ENCODE measurements at regions of chr3 and their contacts with region 1.

Region 1: DNA sequence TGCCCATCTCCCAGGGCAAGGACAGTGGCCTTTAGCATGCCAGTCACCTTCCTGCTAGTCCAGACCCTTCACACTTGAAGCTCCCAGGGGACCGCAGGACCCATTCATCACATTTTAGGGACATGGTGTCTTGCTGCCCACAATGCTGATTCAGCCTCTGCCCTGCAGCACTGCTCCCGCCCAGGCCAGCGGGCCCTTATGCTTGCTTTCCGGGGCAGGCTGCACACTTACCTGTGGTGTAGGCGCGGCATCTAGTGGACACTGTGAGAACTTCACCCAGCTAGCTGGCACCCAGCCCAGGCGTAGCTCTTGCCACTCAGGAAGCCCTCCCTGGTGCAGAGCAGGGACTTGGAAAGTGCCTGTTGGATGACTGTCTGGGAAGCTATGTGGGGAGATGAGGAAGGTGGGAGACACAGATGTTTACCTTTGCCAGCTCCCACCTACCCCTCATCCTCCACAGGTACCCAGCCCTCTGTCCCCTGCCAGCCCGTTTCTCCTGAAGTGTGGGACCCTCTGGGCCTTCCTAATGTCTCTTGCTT is 26.2 kb upstream of the NR2C2 start:
- DNase-seq: peak; percentile 82 to 95 (median 91)
- H3K4me3 ChIP-seq: no peak overlapping the region
- H3K27ac ChIP-seq: no peak overlapping the region
- H3K4me1 ChIP-seq: peaks cover 1% of the 10 kb centered on the region
- H3K27me3 ChIP-seq: no peaks in the 10 kb centered on the region
- CTCF ChIP-seq: peak; percentile 95 to 99 (median 99)
- EP300 ChIP-seq: no peak
- POLR2A ChIP-seq: no peak

Region 2: GRCh38 chr3:14203521-14204079 is 717.5 kb before region 1 on chr3:
- intact Hi-C with region 1: loop called in 1 of 4 experiments (anchors 10 kb)
- DNase-seq: peak; percentile 72 to 84 (median 74)
- H3K4me3 ChIP-seq: no peak overlapping the region
- H3K27ac ChIP-seq: peak overlapping the region in 1 of 2 donors; percentile 3
- H3K4me1 ChIP-seq: peaks cover 19% of the 10 kb centered on the region
- H3K27me3 ChIP-seq: no peaks in the 10 kb centered on the region
- CTCF ChIP-seq: peak; percentile 86 to 93 (median 90)
- EP300 ChIP-seq: no peak
- POLR2A ChIP-seq: no peak

Region 3: GRCh38 chr3:14439579-14440518 is 481.3 kb before region 1 on chr3:
- intact Hi-C with region 1: no loop called
- DNase-seq: peak; percentile 72 to 84 (median 78)
- H3K4me3 ChIP-seq: no peak overlapping the region
- H3K27ac ChIP-seq: peak overlapping the region in 1 of 2 donors; percentile 29
- H3K4me1 ChIP-seq: peaks cover 31% of the 10 kb centered on the region
- H3K27me3 ChIP-seq: no peaks in the 10 kb centered on the region
- CTCF ChIP-seq: no peak
- EP300 ChIP-seq: no peak
- POLR2A ChIP-seq: no peak

Region 4: DNA sequence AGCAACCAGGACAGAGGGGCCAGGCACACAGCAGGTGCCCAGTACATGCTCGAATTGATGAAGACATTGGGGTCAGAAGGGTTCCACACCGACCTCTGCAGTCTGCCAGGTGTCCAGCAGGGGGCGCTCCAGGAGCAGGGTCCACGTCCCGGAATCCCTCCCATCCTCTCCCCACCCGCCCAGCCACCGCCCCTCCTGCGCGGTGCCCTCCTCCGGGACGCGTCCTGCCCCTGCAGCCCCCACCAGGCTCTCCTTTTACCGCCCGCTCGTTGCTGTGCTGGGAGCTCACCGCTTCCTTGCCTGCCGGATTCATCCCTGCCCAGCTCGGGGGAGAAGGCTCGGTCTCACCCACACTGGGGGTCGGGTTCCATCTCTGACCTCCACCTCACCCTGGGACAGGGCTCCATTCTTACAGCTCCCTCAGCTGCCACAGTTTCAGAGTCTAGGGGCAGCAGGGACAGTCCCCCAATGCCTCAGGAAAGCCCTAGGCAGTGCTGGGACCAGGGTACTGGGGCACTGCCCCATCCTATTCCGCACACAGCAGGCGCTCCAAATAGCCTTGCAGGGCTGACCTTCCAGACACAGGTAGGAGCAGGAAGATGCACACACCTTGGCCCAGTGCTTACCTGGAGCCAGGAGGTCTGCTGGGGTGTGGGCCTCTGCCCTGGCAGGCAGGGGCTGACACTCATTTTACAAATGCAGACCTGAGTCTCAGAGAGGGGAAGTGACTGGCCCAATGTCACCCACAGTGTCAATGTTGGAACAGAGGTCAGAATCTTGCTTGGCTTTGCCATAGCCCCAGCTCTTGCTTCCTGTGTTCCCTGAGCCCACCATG is 412.0 kb before region 1 on chr3:
- intact Hi-C with region 1: loop called in 2 of 4 experiments (anchors 2 to 10 kb)
- DNase-seq: peak; percentile 74 to 87 (median 84)
- H3K4me3 ChIP-seq: no peak overlapping the region
- H3K27ac ChIP-seq: peak overlapping the region in 1 of 2 donors; percentile 47
- H3K4me1 ChIP-seq: no peaks in the 10 kb centered on the region
- H3K27me3 ChIP-seq: no peaks in the 10 kb centered on the region
- CTCF ChIP-seq: peak; percentile 78 to 91 (median 83)
- EP300 ChIP-seq: no peak
- POLR2A ChIP-seq: no peak

Region 5: GRCh38 chr3:14672588-14672987 is 248.6 kb before region 1 on chr3:
- intact Hi-C with region 1: loop called (anchors 2 to 5 kb)
- DNase-seq: no peak
- H3K4me3 ChIP-seq: no peak overlapping the region
- H3K27ac ChIP-seq: no peak overlapping the region
- H3K4me1 ChIP-seq: no peaks in the 10 kb centered on the region
- H3K27me3 ChIP-seq: no peaks in the 10 kb centered on the region
- CTCF ChIP-seq: no peak
- EP300 ChIP-seq: no peak
- POLR2A ChIP-seq: no peak

Region 6: GRCh38 chr3:14791343-14791945 is 129.7 kb before region 1 on chr3:
- intact Hi-C with region 1: loop called (anchors 5 to 10 kb)
- DNase-seq: peak; percentile 46 to 77 (median 74)
- H3K4me3 ChIP-seq: no peak overlapping the region
- H3K27ac ChIP-seq: no peak overlapping the region
- H3K4me1 ChIP-seq: peaks cover 8% of the 10 kb centered on the region
- H3K27me3 ChIP-seq: no peaks in the 10 kb centered on the region
- CTCF ChIP-seq: peak; percentile 34 to 61 (median 38)
- EP300 ChIP-seq: no peak
- POLR2A ChIP-seq: no peak

Region 7: DNA sequence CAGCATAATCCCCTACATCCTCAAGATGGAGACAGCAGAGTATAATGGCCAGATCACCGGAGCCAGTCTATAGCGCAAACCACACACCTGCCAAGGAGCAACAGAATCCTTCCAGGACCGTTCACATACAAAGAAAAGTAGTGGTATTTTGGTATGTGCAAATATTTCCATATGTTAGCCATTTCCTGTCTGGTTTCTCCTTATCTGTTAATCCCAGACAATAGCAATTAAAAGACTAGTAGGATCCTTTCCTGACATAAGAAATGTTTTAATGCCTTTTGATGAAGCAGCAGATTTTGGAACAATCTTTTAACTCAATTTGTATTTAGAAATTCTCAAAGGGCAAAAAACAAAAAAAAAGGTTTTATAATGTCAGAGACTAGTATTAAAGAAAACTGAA is 121.8 kb after region 1 on chr3:
- intact Hi-C with region 1: loop called in 2 of 4 experiments (anchors 10 kb)
- DNase-seq: no peak
- H3K4me3 ChIP-seq: no peak overlapping the region
- H3K27ac ChIP-seq: no peak overlapping the region
- H3K4me1 ChIP-seq: peaks cover 4% of the 10 kb centered on the region
- H3K27me3 ChIP-seq: no peaks in the 10 kb centered on the region
- CTCF ChIP-seq: no peak
- EP300 ChIP-seq: no peak
- POLR2A ChIP-seq: no peak

Region 8: DNA sequence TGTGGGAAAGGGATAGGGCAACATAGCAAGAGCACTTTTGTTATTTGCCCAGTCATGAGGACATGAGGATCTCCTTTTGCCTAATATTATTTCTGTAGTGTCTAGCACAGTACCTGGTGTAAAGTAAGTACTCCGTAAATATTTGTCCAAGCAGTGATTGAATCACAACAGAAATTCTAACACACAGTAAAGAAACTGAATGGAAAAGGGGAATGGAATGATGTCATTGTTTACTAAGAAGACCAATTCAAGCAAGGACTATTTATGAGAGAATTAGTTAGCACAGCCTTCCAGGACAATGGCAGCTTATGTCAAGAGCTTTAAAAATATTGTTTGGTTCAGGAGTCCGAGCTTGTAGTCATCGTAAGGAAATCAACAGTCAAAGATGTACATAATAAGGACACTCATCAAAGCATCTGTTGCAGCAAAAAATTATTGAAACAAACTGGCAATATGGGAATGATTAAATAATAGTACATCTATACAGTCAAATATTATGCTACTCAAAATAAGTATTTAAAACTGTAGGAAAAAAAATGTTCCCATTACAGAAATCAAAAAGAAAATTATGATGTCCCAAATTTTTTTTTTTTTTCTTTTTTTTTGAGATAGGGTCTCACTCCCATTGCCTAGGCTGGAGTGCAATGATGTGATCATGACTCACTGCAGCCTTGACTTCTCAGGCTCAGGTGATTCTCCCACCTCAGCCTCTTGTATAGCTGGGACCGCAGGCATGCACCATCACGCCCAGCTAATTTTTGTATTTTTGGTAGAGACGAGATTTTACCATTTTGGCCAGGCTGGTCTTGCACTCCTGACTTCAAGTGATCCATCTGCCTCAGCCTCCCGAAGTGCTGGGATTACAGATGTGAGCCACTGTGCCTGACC is 302.8 kb after region 1 on chr3:
- intact Hi-C with region 1: no loop called
- DNase-seq: no peak
- H3K4me3 ChIP-seq: no peak overlapping the region
- H3K27ac ChIP-seq: no peak overlapping the region
- H3K4me1 ChIP-seq: no peaks in the 10 kb centered on the region
- H3K27me3 ChIP-seq: no peaks in the 10 kb centered on the region
- CTCF ChIP-seq: no peak
- EP300 ChIP-seq: no peak
- POLR2A ChIP-seq: no peak

Measured in ovary (tissue), 10 donors.